Activated CD4-positive, alpha-beta memory T cell treated with anti-CD3 and anti-CD28 coated beads for 36 hours (primary cell): ENCODE measurements at regions of chr12 and their contacts with region 1.

Region 1: GRCh38 chr12:91877022-91877421 is 268.6 kb downstream of the BTG1 start:
- DNase-seq: peak; percentile 91
- H3K4me3 Mint-ChIP-seq: peak overlapping the region; percentile 71
- H3K27ac Mint-ChIP-seq: peak overlapping the region; percentile 94
- H3K4me1 Mint-ChIP-seq: peaks cover 67% of the 10 kb centered on the region
- H3K27me3 Mint-ChIP-seq: no peaks in the 10 kb centered on the region

Region 2: GRCh38 chr12:91811481-91812287 is 65.3 kb before region 1 on chr12:
- CTCF ChIA-PET with region 1: interaction called, 13 read pairs
- POLR2A ChIA-PET with region 1: no interaction called
- intact Hi-C with region 1: loop called (anchors 1 kb)
- DNase-seq: peak; percentile 80
- H3K4me3 Mint-ChIP-seq: no peak overlapping the region
- H3K27ac Mint-ChIP-seq: no peak overlapping the region
- H3K4me1 Mint-ChIP-seq: peaks cover 20% of the 10 kb centered on the region
- H3K27me3 Mint-ChIP-seq: no peaks in the 10 kb centered on the region

Region 3: DNA sequence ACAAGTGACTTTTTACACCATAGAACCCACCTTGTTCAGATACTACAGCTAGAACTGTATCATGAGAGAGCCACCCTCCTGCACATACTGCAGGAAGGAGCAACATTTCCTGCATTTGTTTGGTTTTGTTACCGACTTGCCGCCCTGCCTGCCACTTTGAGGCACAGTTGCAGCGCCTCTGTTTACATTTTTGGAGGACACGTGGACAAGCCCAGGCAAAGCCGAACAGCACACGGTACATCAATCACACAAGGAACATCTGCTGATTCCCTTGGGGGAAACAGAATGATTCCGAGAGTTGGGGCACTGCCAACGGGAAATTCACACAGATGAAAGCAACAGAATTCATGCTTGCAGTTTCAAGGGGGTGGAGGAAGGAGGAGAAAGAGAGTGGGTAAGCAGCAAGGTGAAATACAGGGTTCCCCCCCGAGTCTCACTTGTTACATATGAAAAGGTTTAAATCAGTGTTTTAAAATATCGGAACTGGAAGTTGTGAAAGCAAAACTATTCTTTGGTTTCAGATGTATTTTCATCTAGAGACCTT is 157.9 kb after region 1 on chr12:
- CTCF ChIA-PET with region 1: no interaction called
- POLR2A ChIA-PET with region 1: no interaction called
- intact Hi-C with region 1: loop called (anchors 2 kb)
- DNase-seq: peak; percentile 66
- H3K4me3 Mint-ChIP-seq: peak overlapping the region; percentile 84
- H3K27ac Mint-ChIP-seq: peak overlapping the region; percentile 78
- H3K4me1 Mint-ChIP-seq: peaks cover 83% of the 10 kb centered on the region
- H3K27me3 Mint-ChIP-seq: no peaks in the 10 kb centered on the region

Region 4: GRCh38 chr12:92208613-92209121 is 331.6 kb after region 1 on chr12:
- CTCF ChIA-PET with region 1: no interaction called
- POLR2A ChIA-PET with region 1: no interaction called
- intact Hi-C with region 1: loop called (anchors 1 kb)
- DNase-seq: no peak
- H3K4me3 Mint-ChIP-seq: peak overlapping the region; percentile 70
- H3K27ac Mint-ChIP-seq: peak overlapping the region; percentile 87
- H3K4me1 Mint-ChIP-seq: peaks cover 35% of the 10 kb centered on the region
- H3K27me3 Mint-ChIP-seq: no peaks in the 10 kb centered on the region

Region 5: GRCh38 chr12:92469837-92470236 is 592.8 kb after region 1 on chr12:
- CTCF ChIA-PET with region 1: no interaction called
- POLR2A ChIA-PET with region 1: no interaction called
- intact Hi-C with region 1: loop called (anchors 5 kb)
- DNase-seq: no peak
- H3K4me3 Mint-ChIP-seq: no peak overlapping the region
- H3K27ac Mint-ChIP-seq: peak overlapping the region; percentile 83
- H3K4me1 Mint-ChIP-seq: peaks cover 38% of the 10 kb centered on the region
- H3K27me3 Mint-ChIP-seq: no peaks in the 10 kb centered on the region